ENCODE measurements at regions of chr1 and their contacts with region 1.

Region 1: DNA sequence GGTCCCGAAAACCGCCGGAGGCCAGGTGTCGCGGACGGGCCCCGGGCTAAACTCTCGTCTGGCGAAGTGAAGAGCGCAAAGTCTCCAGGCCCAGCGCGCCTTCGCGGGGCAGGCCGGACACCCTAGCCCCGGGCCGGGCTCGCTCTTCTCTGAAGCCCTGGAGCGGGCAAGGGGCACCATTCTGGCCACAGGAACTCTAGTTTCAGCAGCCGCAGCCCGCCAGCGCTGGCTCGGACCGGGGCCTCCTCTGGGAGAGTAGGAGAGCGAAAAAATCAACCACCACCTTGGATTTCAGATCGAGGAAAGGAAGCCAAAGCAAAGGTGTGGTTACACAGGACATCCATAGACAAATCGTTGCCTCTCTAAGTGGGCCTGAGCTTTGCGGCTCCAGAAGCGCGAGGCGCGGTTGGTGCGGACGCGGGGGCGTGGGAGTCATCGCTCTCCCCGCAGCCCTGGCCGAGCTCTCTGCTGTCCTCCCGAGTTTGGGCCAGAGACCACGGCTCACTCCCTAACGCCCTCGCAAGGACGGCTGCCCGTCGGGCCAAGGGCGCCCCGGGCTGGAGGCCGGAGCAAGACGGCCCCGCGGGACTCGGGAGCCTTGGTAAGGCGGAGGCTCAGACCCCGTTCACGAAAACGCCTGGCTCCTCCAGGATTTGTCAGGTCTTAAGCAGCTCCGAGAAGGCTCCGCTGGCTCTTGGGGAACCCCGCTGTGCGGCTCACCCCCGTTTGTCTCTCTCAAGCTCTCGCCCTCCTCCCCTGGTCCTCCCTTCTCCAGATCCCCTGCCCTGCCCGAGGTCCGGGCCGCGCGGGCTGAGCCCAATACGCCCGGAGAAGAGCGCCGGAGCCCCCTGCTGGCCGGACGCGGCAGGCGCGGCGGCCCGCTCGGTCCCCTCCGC is 132.9 kb upstream of the DPYD start:
- DNase-seq: peak; percentile 36
- H3K4me3 ChIP-seq: peak overlapping the region; percentile 53 to 67 (median 55)
- H3K27ac ChIP-seq: no peak overlapping the region
- H3K4me1 ChIP-seq: peaks cover 11% of the 10 kb centered on the region
- H3K27me3 ChIP-seq: no peaks in the 10 kb centered on the region
- CTCF ChIP-seq: peak; percentile 54 to 71

Region 2: GRCh38 chr1:96346708-96347107 is 1707.0 kb before region 1 on chr1:
- CTCF ChIA-PET with region 1: no interaction called
- dilution Hi-C with region 1: no loop called
- in situ Hi-C with region 1: no loop called
- intact Hi-C with region 1: loop called (anchors 5 kb)
- DNase-seq: no peak
- H3K4me3 ChIP-seq: no peak overlapping the region
- H3K27ac ChIP-seq: no peak overlapping the region
- H3K4me1 ChIP-seq: no peaks in the 10 kb centered on the region
- H3K27me3 ChIP-seq: no peaks in the 10 kb centered on the region
- CTCF ChIP-seq: peak; percentile 14 to 40

Region 3: DNA sequence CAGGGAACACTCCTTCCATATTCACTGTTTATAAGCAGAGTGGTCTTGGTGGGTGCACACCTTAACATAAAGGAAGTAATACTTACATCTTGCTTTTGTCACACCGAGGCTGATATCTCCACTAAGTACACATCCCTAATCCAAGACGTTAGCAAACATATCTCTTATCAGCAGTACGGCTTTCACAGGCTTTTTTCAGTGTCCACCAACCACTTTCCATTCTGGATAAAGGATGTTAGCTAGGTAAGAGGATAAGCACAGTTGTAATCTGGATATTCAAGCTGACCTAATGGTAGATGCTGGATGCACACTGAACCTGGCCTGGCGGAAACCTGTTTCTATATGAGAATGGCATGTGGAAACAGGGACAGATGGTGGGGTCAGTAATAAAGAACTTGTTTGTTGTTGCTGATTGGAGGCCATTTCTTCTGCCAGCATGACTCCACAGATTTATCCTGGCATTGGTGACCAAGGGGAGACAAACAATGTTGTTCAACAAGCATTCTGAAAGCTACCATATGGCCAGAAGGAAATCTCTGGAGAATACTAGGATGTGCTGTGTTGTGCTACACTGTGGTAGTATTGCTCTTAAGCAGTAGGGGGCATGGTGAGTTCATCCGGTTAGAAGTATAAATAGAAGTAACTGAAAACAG is 915.7 kb before region 1 on chr1:
- CTCF ChIA-PET with region 1: no interaction called
- dilution Hi-C with region 1: no loop called
- in situ Hi-C with region 1: no loop called
- intact Hi-C with region 1: loop called (anchors 5 kb)
- DNase-seq: peak; percentile 42
- H3K4me3 ChIP-seq: no peak overlapping the region
- H3K27ac ChIP-seq: no peak overlapping the region
- H3K4me1 ChIP-seq: no peaks in the 10 kb centered on the region
- H3K27me3 ChIP-seq: no peaks in the 10 kb centered on the region
- CTCF ChIP-seq: peak; percentile 80 to 81

Region 4: GRCh38 chr1:97396463-97396862 is 657.3 kb before region 1 on chr1:
- CTCF ChIA-PET with region 1: no interaction called
- dilution Hi-C with region 1: no loop called
- in situ Hi-C with region 1: no loop called
- intact Hi-C with region 1: no loop called
- DNase-seq: no peak
- H3K4me3 ChIP-seq: no peak overlapping the region
- H3K27ac ChIP-seq: no peak overlapping the region
- H3K4me1 ChIP-seq: no peaks in the 10 kb centered on the region
- H3K27me3 ChIP-seq: no peaks in the 10 kb centered on the region
- CTCF ChIP-seq: no peak

Region 5: DNA sequence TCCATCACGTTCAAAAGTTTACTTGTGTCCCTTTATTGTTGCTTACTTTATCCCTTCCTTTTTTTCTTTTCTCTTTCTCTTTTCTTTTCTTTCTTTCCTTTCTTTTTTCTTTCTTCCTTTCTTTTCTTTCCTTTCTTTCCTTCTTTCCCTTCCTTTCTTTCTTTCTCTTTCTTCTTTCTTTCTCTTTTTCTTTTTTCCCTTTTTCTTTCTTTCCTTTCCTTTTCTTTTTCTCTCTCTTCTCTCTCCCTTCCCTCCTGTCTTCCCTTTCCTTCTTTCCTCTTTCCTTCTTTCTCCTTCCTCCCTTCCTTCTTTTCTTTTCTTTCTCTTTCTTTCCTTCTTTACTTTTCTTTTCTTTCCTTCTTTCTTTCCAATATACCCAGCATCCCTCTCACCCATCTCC is 524.1 kb before region 1 on chr1:
- CTCF ChIA-PET with region 1: no interaction called
- dilution Hi-C with region 1: no loop called
- in situ Hi-C with region 1: no loop called
- intact Hi-C with region 1: loop called (anchors 5 kb)
- DNase-seq: no peak
- H3K4me3 ChIP-seq: no peak overlapping the region
- H3K27ac ChIP-seq: no peak overlapping the region
- H3K4me1 ChIP-seq: no peaks in the 10 kb centered on the region
- H3K27me3 ChIP-seq: no peaks in the 10 kb centered on the region
- CTCF ChIP-seq: no peak

Region 6: GRCh38 chr1:97820470-97821188 is 233.1 kb before region 1 on chr1:
- CTCF ChIA-PET with region 1: no interaction called
- dilution Hi-C with region 1: no loop called
- in situ Hi-C with region 1: no loop called
- intact Hi-C with region 1: loop called (anchors 5 kb)
- DNase-seq: peak; percentile 23
- H3K4me3 ChIP-seq: no peak overlapping the region
- H3K27ac ChIP-seq: no peak overlapping the region
- H3K4me1 ChIP-seq: no peaks in the 10 kb centered on the region
- H3K27me3 ChIP-seq: no peaks in the 10 kb centered on the region
- CTCF ChIP-seq: peak; percentile 36 to 53

Region 7: DNA sequence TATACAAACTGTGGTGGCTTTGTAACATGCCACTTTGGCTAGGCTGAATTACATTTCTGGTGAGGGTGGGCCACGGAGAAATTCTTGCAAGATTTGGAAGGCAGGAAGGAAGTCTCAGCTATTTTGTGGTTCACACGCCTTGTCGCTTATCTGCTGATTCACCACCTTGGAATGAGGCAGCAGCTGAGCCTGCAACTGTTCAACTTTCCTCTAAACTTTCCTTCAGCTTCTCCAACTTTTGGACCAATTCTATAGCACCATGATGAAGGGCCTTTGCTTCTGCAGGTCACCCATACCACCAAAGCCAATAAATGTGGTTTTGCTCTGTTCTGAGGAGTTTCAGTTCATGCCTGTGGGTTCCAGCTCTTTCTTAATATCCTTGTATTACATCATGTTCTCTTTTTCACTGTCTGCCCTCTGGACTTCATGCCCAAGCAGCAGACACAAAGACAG is 270.2 kb after region 1 on chr1:
- CTCF ChIA-PET with region 1: no interaction called
- dilution Hi-C with region 1: no loop called
- in situ Hi-C with region 1: no loop called
- intact Hi-C with region 1: loop called (anchors 2 kb)
- DNase-seq: peak; percentile 89
- H3K4me3 ChIP-seq: no peak overlapping the region
- H3K27ac ChIP-seq: peak overlapping the region; percentile 97
- H3K4me1 ChIP-seq: peaks cover 53% of the 10 kb centered on the region
- H3K27me3 ChIP-seq: no peaks in the 10 kb centered on the region
- CTCF ChIP-seq: no peak